Mammary epithelial cell (primary cell): ENCODE measurements at regions of chr6 and their contacts with region 1.

Region 1: DNA sequence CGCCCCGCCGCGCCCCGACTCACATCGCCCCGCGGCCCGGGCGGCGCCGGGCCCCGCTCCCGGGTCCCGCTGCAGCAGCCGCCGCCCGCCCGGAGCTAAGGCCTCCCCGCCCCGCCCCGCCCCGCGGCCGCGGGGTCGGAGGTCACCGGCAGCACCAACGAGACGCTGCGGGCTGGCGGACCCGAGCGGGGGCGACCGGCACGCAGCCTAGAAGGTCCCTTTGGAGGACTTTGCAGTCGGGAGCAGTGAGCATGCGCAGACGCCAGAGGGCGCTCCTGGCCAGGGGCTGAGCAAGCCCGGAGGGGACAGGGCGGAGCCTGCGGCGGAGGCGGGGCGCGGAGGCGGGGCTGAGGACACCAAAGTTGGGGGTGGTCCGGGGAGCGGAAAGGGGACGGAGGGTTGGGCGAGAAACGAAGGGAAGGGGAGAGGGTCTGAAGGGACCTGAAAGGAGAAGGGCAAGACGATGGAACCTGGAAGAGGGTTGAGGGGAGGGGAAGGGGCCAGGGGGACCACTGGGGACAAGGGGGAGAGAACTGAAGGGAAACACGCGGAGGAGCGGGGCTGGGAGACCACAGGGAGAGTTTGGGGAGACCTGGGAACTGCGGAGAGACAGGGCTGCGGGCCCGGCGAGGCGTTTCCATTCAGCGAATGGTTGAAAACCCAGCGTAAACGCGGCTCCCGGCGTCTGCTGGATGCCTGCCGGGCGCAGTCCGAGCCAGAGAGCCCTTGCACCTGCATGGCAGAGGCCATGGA is at the start of gene FRS3:
- DNase-seq: peak; percentile 83
- H3K4me3 ChIP-seq: peak within 1 kb of the TSS; percentile 61 to 74 (median 68)
- H3K27ac ChIP-seq: no peak within 1 kb of the TSS
- H3K4me1 ChIP-seq: peaks cover 25% of the 10 kb centered on the region
- H3K27me3 ChIP-seq: no peaks in the 10 kb centered on the region
- CTCF ChIP-seq: peak; percentile 81 to 98
- total RNA-seq, gene FRS3: 1.3 to 4.8 TPM

Region 2: DNA sequence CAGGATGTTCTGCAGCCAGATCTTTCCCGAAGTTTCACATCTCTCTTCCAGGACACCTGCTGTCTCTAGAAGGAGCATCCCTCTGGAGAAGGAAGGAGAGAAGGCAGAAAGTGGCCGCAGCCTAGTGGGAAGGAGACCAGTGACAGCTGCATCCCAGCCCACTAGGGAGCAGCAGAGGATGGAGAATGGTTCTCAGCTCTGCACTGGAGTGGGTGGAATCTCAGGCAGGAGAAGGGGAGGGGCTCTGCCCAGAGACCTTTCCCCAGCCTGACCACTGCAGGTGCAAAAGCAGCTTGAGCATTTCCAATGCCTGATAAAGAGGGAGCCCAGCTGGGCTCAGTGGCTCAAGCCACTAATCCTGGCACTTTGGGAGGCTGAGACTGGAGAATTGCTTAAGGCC is 412.3 kb before region 1 on chr6:
- CTCF ChIA-PET with region 1: no interaction called
- dilution Hi-C with region 1: no loop called
- in situ Hi-C with region 1: no loop called
- intact Hi-C with region 1: loop called (anchors 1 kb)
- DNase-seq: peak; percentile 24
- H3K4me3 ChIP-seq: no peak overlapping the region
- H3K27ac ChIP-seq: no peak overlapping the region
- H3K4me1 ChIP-seq: peaks cover 20% of the 10 kb centered on the region
- H3K27me3 ChIP-seq: no peaks in the 10 kb centered on the region
- CTCF ChIP-seq: peak; percentile 71 to 77

Region 3: DNA sequence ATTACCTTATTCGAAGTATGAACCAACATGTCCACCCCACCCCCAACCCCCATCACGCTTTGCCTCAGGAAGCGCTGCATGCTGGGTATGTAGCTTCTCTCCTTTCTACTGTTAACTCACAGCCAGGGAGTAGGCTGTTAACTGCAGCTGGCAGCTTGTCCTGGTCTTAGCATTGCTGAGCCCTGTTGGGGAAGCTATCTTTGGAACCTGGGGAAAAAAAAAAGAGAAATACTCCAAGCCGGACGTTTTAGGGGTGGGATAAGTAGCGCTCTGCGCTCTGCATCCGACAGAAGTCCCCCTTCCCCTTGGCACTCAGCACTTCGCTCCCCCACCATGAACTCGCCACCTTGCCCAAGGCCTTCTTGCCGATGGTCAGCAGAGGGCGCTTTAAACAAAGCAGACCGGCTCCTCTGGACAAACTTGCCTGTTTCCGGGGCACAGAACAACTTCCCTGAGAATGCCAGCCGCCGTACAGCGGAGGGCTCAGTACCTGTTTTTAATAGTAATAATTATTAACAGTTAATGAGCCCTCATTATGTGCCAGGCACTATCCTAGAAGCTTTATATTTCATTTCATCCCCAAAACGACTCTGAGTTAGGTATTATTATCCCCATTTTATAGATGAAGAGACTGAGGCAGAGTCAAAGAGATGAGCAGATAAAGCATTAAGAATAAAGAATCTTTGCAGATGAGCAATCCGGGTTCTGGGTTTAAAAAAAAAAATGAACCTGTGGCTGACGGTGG is 176.9 kb before region 1 on chr6:
- CTCF ChIA-PET with region 1: no interaction called
- dilution Hi-C with region 1: no loop called
- in situ Hi-C with region 1: no loop called
- intact Hi-C with region 1: loop called (anchors 1 kb)
- DNase-seq: peak; percentile 65
- H3K4me3 ChIP-seq: no peak overlapping the region
- H3K27ac ChIP-seq: no peak overlapping the region
- H3K4me1 ChIP-seq: no peaks in the 10 kb centered on the region
- H3K27me3 ChIP-seq: no peaks in the 10 kb centered on the region
- CTCF ChIP-seq: peak; percentile 93 to 95

Region 4: DNA sequence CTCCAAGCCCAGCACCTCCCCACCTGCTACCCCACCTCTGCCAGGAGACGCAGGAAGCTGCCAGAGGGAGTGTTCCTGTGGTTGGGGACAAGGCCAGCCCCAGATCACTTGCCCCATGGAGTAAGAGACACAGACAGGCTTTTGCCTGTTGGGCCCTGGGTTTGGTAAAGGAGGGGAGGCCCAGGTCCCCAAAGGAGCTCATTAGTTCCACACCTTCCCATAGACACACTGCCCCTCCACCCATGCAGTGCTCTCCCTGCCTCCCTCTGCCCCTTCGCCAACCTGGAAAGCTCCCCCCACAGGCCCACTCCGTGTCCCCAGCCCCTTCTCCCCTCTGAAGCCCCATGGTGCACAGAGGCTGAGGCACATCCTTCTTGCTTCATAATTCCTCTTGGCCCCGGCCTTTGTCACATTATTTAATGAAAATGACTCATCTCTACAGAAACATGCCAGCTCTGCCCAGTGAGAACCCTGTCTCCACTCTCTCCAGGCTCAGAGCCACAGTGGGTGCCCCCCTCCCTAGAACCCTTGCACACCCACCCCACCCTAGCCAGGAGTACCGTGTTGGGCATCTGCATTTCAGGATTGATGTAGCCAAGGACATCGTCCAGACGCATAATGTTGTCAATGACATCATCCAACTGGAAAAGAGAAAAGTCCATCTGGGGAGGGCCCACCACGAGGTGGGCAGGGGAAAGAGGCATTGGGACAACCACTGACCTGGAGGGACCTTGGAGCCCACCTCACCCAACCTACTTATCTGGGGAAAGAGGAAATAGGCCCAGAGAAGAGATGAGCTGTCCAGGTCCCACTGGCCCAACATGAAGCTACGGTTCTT is 90.6 kb before region 1 on chr6:
- CTCF ChIA-PET with region 1: no interaction called
- dilution Hi-C with region 1: loop called (anchors 5 kb)
- in situ Hi-C with region 1: loop called in 1 of 2 experiments (anchors 10 kb)
- intact Hi-C with region 1: no loop called
- DNase-seq: no peak
- H3K4me3 ChIP-seq: no peak overlapping the region
- H3K27ac ChIP-seq: no peak overlapping the region
- H3K4me1 ChIP-seq: peaks cover 10% of the 10 kb centered on the region
- H3K27me3 ChIP-seq: no peaks in the 10 kb centered on the region
- CTCF ChIP-seq: no peak

Region 5: DNA sequence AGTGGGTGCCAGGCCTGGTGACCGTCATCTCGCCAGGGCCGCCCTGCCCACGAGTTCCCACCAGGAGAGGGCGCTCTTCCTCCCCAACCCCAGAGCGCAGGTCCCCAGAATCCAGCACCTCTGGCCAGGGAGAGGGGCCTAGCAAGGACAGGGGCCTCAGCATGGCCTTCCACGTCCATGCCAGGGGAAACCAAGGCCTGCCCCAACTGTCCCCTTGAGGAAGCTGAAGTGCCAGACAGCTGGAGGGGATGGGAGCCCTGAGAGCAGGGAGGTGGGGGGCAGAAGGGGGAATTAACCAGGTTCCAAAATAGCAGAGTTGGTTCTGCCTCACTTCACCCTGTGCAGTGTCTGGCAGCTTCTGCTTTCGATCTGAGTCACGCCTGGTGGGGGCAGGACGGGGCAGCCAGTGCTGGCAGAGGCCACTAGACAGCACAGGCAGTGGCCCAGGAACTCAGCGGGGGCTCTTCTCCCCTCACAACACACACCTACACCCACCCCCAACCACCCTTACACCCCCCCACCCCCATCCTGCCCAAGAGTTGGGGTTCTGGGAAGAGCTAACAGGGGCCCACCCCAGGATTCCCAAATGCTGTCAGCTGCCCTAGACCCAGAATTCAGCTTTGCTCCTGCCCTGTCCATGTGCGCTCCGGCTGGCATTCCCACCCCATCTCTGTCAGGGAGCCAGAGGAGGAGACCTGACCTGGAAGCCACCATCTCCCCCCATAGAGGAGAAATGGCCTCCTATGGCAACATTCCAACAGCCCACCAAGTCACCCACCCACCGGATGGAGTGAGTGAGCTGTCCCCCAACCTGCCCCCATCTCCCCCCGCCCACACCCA is 73.8 kb before region 1 on chr6:
- CTCF ChIA-PET with region 1: no interaction called
- dilution Hi-C with region 1: no loop called
- in situ Hi-C with region 1: no loop called
- intact Hi-C with region 1: loop called (anchors 1 kb)
- DNase-seq: peak; percentile 71
- H3K4me3 ChIP-seq: no peak overlapping the region
- H3K27ac ChIP-seq: peak overlapping the region; percentile 17
- H3K4me1 ChIP-seq: peaks cover 33% of the 10 kb centered on the region
- H3K27me3 ChIP-seq: no peaks in the 10 kb centered on the region
- CTCF ChIP-seq: peak; percentile 66 to 85

Region 6: GRCh38 chr6:42059743-42060142 is 279.8 kb after region 1 on chr6:
- CTCF ChIA-PET with region 1: no interaction called
- dilution Hi-C with region 1: no loop called
- in situ Hi-C with region 1: no loop called
- intact Hi-C with region 1: no loop called
- DNase-seq: no peak
- H3K4me3 ChIP-seq: no peak overlapping the region
- H3K27ac ChIP-seq: no peak overlapping the region
- H3K4me1 ChIP-seq: no peaks in the 10 kb centered on the region
- H3K27me3 ChIP-seq: no peaks in the 10 kb centered on the region
- CTCF ChIP-seq: no peak

Region 7: DNA sequence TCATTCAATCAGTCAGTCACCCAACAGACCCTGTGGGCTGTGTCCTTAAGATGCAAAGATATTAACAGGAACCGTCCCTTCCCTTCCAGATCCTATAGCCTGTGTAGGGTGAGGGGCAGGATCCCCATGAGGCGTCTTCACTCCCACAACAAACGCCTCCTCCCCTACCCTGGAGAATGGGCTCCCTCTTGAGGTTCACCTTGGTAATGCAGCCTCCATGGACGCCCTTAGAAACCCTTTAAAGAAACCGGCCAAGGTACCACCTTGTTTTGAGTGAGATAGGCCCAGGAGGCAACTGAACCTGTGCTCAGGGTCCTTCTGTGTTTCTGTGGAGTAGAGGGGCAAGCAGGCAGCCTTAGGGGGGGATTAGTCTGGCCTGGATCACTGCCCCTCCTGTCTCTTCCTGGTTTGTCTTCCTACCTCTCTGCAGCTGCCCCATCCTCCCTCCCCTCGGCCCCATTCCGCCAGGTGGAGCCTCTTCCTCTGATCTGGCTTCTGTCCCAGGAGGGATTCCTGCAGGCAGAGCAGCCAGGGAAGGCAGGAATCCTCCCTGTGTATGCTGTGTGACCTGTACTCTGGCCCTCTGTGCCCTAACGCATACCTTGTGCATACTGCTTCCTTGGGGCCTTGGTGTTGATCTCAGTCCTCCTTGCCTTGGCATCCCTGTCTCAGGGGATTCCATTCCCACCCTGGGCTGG is 386.6 kb after region 1 on chr6:
- CTCF ChIA-PET with region 1: no interaction called
- dilution Hi-C with region 1: no loop called
- in situ Hi-C with region 1: no loop called
- intact Hi-C with region 1: loop called (anchors 1 kb)
- DNase-seq: peak; percentile 78
- H3K4me3 ChIP-seq: no peak overlapping the region
- H3K27ac ChIP-seq: no peak overlapping the region
- H3K4me1 ChIP-seq: peaks cover 8% of the 10 kb centered on the region
- H3K27me3 ChIP-seq: no peaks in the 10 kb centered on the region
- CTCF ChIP-seq: peak; percentile 83 to 96